ENCODE measurements at regions of chr16 and their contacts with region 1.

Region 1: DNA sequence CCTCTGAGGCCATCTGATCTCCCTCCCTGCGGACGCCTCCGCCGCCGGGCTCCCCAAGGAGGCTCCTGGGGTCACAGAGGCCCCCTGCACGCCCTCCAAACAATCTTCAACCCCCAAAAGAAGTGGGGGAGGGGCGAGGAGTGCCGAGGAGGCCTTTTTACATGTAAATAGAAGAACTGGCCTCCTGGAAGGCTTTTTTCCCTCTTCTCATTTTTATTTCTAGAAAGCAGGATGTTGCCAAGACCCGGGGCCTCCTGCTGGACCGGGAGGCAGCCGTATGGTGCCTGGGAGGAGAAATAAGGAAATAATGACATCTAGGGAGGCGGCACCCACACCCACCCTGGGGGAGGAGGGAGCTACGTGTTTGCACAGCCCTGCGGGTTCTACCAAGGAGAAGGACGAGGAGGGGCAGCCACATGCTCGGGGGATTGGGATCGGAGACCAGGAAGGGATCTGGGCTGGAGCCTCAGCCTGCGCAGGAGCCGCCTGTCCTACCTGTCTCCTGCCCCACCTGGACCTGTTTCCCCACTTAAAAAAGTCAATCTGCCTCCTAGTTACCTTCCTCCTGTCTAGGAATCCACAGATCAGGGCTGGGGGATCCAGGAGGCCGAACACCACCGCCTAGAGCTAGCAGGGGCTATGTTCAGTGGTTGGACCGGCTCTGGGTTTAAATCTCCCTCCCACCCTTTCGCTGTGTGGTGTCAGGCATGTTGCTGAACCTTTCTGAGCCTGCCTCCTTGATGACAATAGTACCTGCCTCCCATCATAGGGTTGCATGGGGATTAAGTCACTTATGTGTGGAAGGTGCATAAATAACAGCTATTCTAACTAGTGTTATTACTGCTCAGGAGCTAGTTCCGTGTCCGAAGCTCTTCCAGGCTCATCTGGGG is 175.7 kb upstream of the GSE1 start:
- DNase-seq: peak in 4 of 6 donors; percentile 64 to 89 (median 82)
- ATAC-seq: peak; percentile 78 to 90 (median 87)
- H3K4me3 ChIP-seq: peak overlapping the region in 2 of 4 donors; percentile 13 to 21
- H3K27ac ChIP-seq: peak overlapping the region; percentile 77 to 90 (median 82)
- H3K4me1 ChIP-seq: peaks cover 11 to 12% (median 11%) of the 10 kb centered on the region in 3 donors
- H3K27me3 ChIP-seq: no peaks in the 10 kb centered on the region
- CTCF ChIP-seq: no peak

Region 2: GRCh38 chr16:85503679-85504231 is 66.3 kb after region 1 on chr16:
- intact Hi-C with region 1: no loop called
- DNase-seq: no peak
- ATAC-seq: peak in 2 of 4 donors; percentile 40 to 62
- H3K4me3 ChIP-seq: no peak overlapping the region
- H3K27ac ChIP-seq: no peak overlapping the region
- H3K4me1 ChIP-seq: no peaks in the 10 kb centered on the region
- H3K27me3 ChIP-seq: no peaks in the 10 kb centered on the region
- CTCF ChIP-seq: no peak

Region 3: DNA sequence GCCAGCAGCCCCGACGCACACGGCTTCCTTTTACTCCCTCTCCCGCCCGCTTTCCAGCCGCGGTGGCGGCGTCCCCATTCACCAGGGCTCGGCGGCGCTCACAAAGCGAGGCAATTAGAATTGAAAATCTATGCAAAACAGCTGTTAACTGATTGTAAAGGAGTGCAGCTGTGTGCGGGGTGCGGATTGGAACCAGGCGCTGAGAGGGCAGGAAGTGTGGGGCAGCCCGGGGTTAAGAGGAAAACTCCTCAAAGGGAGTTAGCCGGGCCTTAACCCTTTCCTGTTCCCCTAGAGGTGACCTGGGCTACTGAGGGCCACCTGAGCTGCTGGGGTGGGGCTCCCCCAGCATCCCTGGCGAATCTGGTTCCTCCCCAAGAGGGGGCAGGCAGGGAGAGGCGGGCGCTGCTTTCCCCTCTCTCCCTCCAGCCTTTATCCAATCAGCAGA is 169.9 kb after region 1 on chr16:
- intact Hi-C with region 1: loop called in 1 of 3 experiments (anchors 10 kb)
- DNase-seq: peak in 1 of 6 donors; percentile 18
- ATAC-seq: no peak
- H3K4me3 ChIP-seq: no peak overlapping the region
- H3K27ac ChIP-seq: peak overlapping the region in 3 of 4 donors; percentile 22 to 72 (median 30)
- H3K4me1 ChIP-seq: peaks cover 33 to 62% (median 50%) of the 10 kb centered on the region in 3 donors
- H3K27me3 ChIP-seq: no peaks in the 10 kb centered on the region
- CTCF ChIP-seq: no peak

Region 4: GRCh38 chr16:85641776-85642176 is 204.4 kb after region 1 on chr16:
- intact Hi-C with region 1: no loop called
- DNase-seq: peak; percentile 84 to 96 (median 92)
- ATAC-seq: peak; percentile 70 to 78 (median 74)
- H3K4me3 ChIP-seq: no peak overlapping the region
- H3K27ac ChIP-seq: peak overlapping the region in 3 of 4 donors; percentile 26 to 56 (median 39)
- H3K4me1 ChIP-seq: peaks cover 28 to 34% (median 31%) of the 10 kb centered on the region in 3 donors
- H3K27me3 ChIP-seq: no peaks in the 10 kb centered on the region
- CTCF ChIP-seq: no peak

Measured in pancreas (tissue), 10 donors.